PC-9 (cell line): ENCODE measurements at regions of chr4 and their contacts with region 1.

Region 1: DNA sequence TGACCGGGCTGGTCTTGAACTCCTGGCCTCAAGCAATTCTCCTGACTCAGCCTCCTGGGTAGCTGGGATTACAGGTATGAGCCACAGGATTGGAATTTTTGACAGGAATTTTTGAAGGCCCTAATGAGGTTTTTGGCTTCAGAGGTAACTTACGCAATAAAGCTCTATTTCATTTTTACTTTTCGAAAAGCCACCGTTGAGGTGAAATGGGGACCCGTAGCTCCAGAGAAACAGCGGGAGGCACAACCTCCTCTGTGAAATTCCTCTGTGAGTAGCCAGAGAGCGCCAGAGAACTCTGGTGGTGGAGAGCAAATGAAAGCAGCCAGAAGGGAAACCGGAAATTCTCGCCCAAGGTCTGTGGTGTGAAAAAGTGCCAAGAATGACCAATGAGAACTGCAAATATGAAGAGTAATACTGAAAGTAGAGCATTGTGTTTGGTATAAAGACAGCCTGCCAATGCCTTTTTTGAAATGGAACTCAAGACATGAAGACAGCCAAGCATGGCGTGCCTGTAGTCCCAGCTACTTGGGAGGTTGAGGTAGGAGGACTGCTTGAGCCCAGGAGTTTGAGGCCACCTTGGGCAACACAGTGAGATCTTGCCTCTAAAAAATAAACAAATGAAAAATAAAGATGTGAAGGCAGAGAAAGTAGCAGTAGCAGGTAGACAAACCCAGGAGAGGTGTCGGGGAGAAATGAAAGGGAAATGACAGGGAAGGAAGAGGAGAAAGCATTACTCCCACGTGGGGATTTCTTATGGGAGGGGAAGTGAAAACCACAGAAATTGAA is 33.0 kb upstream of the TMEM131L start:
- DNase-seq: peak; percentile 72 to 87
- H3K4me3 ChIP-seq: no peak overlapping the region
- H3K27ac ChIP-seq: peak overlapping the region; percentile 61; the same call in 1 of the 2 replicates
- H3K4me1 ChIP-seq: 0 out of 2 replicates have a peak, but pooled peaks cover 8% of the 10 kb centered on the region
- H3K27me3 ChIP-seq: no peaks in the 10 kb centered on the region
- CTCF ChIP-seq: peak; percentile 70

Region 2: DNA sequence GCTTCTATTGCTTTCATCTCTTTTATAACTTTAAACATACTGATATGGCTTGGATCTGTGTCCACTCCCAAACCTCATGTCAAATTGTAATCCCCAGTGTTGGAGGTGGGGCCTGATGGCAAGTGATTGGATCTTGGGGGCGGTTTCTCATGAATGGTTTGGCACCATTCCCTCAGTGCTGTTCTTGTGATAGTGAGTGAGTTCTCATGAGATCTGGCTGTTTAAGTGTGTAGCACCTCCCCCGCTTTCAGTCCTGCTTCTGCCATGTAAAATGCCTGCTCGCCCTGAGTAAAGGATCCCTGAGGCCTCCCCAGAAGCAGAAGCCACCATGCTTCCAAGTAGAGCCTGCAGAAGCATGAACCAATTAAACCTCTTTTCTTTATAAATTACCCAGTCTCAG is 71.0 kb before region 1 on chr4:
- CTCF ChIA-PET with region 1: interaction called, 13 read pairs
- POLR2A ChIA-PET with region 1: no interaction called
- intact Hi-C with region 1: no loop called
- DNase-seq: no peak
- H3K4me3 ChIP-seq: no peak overlapping the region
- H3K27ac ChIP-seq: no peak overlapping the region
- H3K4me1 ChIP-seq: no peaks in the 10 kb centered on the region
- H3K27me3 ChIP-seq: no peaks in the 10 kb centered on the region
- CTCF ChIP-seq: no peak

Region 3: DNA sequence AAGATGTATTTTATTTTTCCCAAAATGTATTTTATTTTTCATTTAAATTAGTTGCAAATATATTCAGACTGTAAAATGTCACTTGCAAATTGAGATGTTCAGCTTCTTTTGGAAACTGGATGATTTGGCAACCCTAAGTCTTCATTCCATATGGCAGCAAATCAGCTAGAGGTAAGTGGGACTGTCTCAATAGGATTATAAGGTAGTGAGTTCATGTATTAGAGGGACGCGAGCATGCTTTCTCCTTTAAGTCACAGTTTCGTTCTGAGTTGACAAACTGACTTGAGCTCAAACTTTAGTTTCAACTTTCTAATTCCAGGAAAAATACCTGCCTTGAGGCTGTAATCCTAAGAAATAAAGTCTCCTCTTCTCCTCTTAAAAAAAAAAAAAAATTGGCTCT is 11.2 kb before region 1 on chr4:
- CTCF ChIA-PET with region 1: no interaction called
- POLR2A ChIA-PET with region 1: no interaction called
- intact Hi-C with region 1: no loop called
- DNase-seq: no peak
- H3K4me3 ChIP-seq: no peak overlapping the region
- H3K27ac ChIP-seq: no peak overlapping the region
- H3K4me1 ChIP-seq: no peaks in the 10 kb centered on the region
- H3K27me3 ChIP-seq: no peaks in the 10 kb centered on the region
- CTCF ChIP-seq: no peak

Region 4: DNA sequence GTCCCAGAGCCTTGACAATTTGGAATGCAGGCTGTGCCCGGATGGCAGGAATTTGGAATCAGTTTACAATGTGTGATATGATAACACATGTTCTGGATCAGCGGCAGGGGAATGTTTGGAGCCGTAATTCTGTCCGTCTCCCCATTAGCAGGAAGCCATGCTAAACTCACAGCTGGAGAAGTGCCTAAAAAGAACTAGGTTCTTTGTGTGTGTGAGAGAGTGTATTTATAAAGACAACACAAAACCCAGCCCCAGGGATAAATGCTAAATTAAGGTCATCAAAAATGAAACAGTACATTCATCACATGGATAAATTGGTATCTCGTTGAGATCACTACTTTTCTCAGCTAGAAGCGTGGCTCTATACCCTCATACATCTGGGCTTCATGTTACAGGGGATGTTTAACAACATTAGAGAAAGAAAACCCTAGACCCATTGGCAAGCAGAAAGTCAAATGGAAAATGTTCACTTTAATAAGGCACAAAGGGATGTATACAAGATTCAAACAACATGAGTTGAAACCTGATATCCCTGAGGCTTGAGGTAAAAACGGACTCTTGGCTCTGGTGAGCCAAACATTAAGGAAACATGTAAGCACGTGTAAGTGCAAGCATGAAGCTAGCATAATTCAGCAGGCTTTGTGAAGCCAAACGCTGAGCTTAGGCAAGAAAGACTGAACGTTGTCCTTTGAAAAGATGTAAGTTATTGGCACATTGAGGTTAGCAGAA is 15.0 kb after region 1 on chr4:
- CTCF ChIA-PET with region 1: interaction called, 15 read pairs
- POLR2A ChIA-PET with region 1: no interaction called
- intact Hi-C with region 1: no loop called
- DNase-seq: no peak
- H3K4me3 ChIP-seq: no peak overlapping the region
- H3K27ac ChIP-seq: no peak overlapping the region
- H3K4me1 ChIP-seq: no peaks in the 10 kb centered on the region
- H3K27me3 ChIP-seq: no peaks in the 10 kb centered on the region
- CTCF ChIP-seq: no peak